Activated CD4-positive, alpha-beta T cell treated with anti-CD3 and anti-CD28 coated beads, Interleukin-2, amount 10 ng/mL, durations not matched to agents 24 days and 14 days (primary cell): ENCODE measurements at regions of chr1 and their contacts with region 1.

Region 1: DNA sequence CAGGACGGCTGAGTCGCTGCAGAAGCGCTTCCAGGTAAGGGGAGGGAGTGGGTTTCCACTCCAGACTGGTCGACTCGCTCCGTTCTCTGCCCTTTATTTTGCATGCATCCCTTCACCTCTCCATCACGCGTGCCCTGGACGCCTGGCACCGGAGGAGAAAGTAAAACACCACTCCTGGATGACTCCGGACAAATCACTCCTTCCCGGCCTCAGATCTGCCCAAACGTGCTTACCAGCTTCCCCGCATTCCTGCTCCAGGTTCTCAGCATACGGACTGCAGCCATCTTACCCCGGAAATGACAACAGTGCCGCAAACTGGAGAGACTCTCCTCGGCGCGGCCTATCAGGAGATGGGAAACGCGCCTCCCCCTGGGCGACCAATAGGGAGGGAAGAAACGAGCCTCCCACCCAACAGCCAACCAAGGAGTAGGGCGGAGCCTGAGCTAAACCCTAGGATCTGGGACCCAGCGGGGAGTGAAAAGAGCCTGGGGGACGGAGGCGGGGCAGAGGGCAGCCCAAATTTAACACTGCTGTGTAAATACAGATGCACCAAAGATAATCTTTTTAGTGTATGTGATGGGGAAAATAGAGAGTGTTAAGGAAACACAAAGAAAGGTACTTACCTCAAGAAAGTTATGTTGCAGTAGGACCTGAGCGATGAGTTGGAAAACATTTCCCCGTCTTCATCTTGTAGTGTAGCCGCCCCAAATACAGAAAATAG is at the start of gene DBT:
- DNase-seq: peak; percentile 98
- H3K4me3 Mint-ChIP-seq: no peak within 1 kb of the TSS
- H3K27ac Mint-ChIP-seq: no peak within 1 kb of the TSS
- H3K4me1 Mint-ChIP-seq: peaks cover 11% of the 10 kb centered on the region
- H3K27me3 Mint-ChIP-seq: peaks cover 8% of the 10 kb centered on the region
- total RNA-seq, gene DBT: 11.9 and 12.4 TPM in 2 replicates

Region 2: DNA sequence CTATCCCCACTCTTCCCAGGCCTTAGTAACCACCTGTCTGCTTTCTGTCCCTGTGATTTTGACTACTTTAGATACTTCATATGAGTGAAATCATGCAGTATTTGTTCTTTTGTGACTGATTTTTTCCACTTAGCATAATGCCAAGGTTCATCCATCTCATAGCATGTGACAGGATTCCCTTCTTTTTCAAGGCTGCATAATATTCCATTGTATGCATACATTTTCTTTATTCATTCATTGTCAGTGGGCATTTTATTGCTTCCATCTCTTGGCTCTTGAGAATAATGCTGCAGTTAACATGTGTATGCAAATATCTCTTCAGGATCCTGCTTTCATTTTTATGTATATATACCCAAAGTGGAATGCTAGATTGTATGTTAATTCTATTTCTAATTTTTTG is 343.2 kb before region 1 on chr1:
- intact Hi-C with region 1: no loop called
- DNase-seq: no peak
- H3K4me3 Mint-ChIP-seq: no peak overlapping the region
- H3K27ac Mint-ChIP-seq: no peak overlapping the region
- H3K4me1 Mint-ChIP-seq: no peaks in the 10 kb centered on the region
- H3K27me3 Mint-ChIP-seq: no peaks in the 10 kb centered on the region

Region 3: DNA sequence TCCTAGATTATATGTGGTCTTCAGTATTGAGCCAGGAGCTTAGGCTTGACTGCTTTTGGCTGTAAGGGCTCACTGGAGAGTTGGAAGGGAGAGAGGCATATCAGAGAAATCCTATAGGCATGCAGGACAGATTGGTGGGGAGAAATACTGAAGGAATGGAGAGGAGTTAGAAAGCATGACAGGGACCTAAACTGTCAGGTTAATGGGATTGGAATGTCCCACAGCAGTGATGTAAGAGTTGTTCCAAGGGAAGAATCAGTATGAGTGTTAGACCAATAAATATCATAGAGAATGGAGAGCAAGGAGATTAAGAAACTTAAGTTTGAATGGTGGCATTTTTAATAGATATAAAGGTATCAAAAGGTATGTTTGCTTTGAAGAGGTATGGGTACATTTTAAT is 240.2 kb before region 1 on chr1:
- intact Hi-C with region 1: no loop called
- DNase-seq: no peak
- H3K4me3 Mint-ChIP-seq: no peak overlapping the region
- H3K27ac Mint-ChIP-seq: no peak overlapping the region
- H3K4me1 Mint-ChIP-seq: no peaks in the 10 kb centered on the region
- H3K27me3 Mint-ChIP-seq: no peaks in the 10 kb centered on the region

Region 4: GRCh38 chr1:100265931-100266740 is 16.4 kb after region 1 on chr1 and contains the start of gene RTCA:
- intact Hi-C with region 1: loop called (anchors 2 kb)
- DNase-seq: peak; percentile 99
- H3K4me3 Mint-ChIP-seq: peak within 1 kb of the TSS; percentile 98
- H3K27ac Mint-ChIP-seq: peak within 1 kb of the TSS; percentile 96
- H3K4me1 Mint-ChIP-seq: peaks cover 34% of the 10 kb centered on the region
- H3K27me3 Mint-ChIP-seq: no peaks in the 10 kb centered on the region
- total RNA-seq, gene RTCA: 48.5 and 49.1 TPM in 2 replicates

Region 5: GRCh38 chr1:100343897-100344296 is 94.2 kb after region 1 on chr1:
- intact Hi-C with region 1: no loop called
- DNase-seq: no peak
- H3K4me3 Mint-ChIP-seq: no peak overlapping the region
- H3K27ac Mint-ChIP-seq: no peak overlapping the region
- H3K4me1 Mint-ChIP-seq: no peaks in the 10 kb centered on the region
- H3K27me3 Mint-ChIP-seq: peaks cover 21% of the 10 kb centered on the region

Region 6: DNA sequence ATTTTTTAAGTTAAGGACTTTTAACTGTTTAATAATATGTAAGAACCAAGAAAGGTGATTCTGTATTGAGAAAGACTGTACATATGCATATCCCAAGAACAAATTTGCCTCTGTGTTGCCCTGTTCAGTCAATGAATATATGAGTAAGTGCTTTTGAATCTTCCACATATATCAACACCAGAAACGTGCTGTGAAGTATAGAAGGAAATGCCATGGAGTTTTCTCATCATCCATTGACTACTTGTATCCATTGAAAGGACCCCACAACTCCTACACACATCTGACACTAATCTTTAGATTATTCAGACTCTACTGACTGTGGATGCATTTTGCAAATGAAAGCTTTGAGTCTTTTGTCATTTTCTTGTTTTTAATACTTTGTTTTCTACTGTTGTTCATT is 1354.0 kb after region 1 on chr1:
- intact Hi-C with region 1: no loop called
- DNase-seq: no peak
- H3K4me3 Mint-ChIP-seq: no peak overlapping the region
- H3K27ac Mint-ChIP-seq: no peak overlapping the region
- H3K4me1 Mint-ChIP-seq: peaks cover 1% of the 10 kb centered on the region
- H3K27me3 Mint-ChIP-seq: peaks cover 8% of the 10 kb centered on the region